ENCODE measurements at regions of chr7 and their contacts with region 1.

Region 1: DNA sequence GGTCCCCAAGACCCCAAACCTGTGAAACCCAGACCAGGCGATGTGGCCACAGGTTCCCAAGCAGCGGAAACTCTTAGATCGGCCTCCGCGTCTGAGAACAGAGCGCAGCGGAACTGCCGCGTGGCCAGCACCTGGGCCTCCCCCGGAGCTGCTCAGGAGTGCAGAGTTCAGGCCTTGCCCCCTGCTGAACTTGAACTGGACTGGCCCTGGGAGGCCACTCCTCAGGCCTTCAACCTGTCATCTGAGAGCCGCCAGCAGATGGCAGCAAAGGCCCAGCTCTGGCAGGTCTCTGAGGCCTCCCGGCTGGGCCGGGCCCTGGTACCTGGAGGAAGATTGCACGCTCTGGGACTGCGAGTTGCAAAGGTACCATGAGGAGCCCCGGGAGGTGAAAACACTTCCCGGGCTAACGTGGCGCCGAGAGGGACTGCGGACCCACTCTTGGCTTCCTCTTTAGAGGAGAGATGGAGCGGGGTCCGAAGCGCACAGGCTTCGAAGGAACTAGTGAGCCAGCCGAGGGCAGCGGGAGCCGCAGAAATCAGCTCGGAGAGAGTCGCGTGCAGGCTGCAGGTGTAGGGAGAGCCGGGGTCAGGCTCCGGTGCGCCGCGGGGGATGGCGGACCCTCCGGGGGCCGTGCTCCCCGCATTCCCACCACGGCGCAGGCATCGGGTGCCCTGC is 89.1 kb downstream of the PAXIP1 start:
- DNase-seq: peak; percentile 67
- H3K4me3 Mint-ChIP-seq: no peak overlapping the region
- H3K27ac Mint-ChIP-seq: no peak overlapping the region
- H3K4me1 Mint-ChIP-seq: no peaks in the 10 kb centered on the region
- H3K27me3 Mint-ChIP-seq: no peaks in the 10 kb centered on the region
- CTCF ChIP-seq: peak; percentile 88

Region 2: GRCh38 chr7:154832557-154833138 is 81.1 kb before region 1 on chr7:
- CTCF ChIA-PET with region 1: interaction called, 4 read pairs
- POLR2A ChIA-PET with region 1: no interaction called
- intact Hi-C with region 1: loop called (anchors 5 kb)
- DNase-seq: peak; percentile 9
- H3K4me3 Mint-ChIP-seq: no peak overlapping the region
- H3K27ac Mint-ChIP-seq: no peak overlapping the region
- H3K4me1 Mint-ChIP-seq: no peaks in the 10 kb centered on the region
- H3K27me3 Mint-ChIP-seq: peaks cover 20% of the 10 kb centered on the region
- CTCF ChIP-seq: peak; percentile 25

Region 3: GRCh38 chr7:154892462-154892861 is 21.3 kb before region 1 on chr7:
- CTCF ChIA-PET with region 1: interaction called, 44 read pairs
- POLR2A ChIA-PET with region 1: interaction called, 4 read pairs
- intact Hi-C with region 1: no loop called
- DNase-seq: no peak
- H3K4me3 Mint-ChIP-seq: no peak overlapping the region
- H3K27ac Mint-ChIP-seq: no peak overlapping the region
- H3K4me1 Mint-ChIP-seq: no peaks in the 10 kb centered on the region
- H3K27me3 Mint-ChIP-seq: no peaks in the 10 kb centered on the region
- CTCF ChIP-seq: no peak

Region 4: DNA sequence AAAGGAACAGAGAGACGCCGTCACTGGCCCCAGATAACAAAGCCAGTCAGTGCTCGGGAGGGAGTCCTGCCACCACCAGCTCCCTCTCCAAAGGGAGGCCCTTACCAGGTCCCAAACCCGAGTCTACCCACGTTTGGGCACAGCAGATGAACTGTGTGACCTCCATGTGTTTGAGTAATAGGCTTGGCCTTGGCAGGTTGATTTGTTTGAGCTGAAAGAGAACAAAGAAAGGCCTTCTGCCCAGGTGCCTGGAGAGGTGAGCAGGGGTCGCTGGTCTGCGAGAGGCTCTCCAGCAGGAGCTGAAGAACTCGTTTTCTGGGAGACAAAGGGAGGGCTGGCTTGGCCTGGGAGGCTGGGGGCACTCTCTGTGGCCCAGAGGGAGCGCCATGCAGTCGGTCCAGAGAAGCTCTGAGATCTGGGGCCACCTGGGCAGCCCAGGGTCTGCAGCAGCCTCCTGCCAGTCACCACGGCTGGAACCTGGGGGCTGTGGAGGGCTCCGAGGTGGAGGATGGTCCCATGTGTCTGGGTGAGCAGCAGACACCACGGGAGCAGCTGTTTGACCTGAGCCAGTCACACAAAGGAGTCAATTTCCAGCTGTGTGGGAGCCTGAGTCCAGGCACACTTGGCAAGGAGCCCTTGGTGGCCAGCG is 10.6 kb before region 1 on chr7:
- CTCF ChIA-PET with region 1: interaction called, 31 read pairs
- POLR2A ChIA-PET with region 1: no interaction called
- intact Hi-C with region 1: no loop called
- DNase-seq: no peak
- H3K4me3 Mint-ChIP-seq: no peak overlapping the region
- H3K27ac Mint-ChIP-seq: no peak overlapping the region
- H3K4me1 Mint-ChIP-seq: no peaks in the 10 kb centered on the region
- H3K27me3 Mint-ChIP-seq: no peaks in the 10 kb centered on the region
- CTCF ChIP-seq: no peak

Measured in MCF 10A (cell line).